ENCODE measurements at regions of chr14 and their contacts with region 1.

Region 1: GRCh38 chr14:95442633-95443021 is 73.8 kb downstream of the SYNE3 start:
- DNase-seq: peak; percentile 79
- ATAC-seq: peak; percentile 95
- H3K4me3 Mint-ChIP-seq: no peak overlapping the region
- H3K27ac Mint-ChIP-seq: peak overlapping the region; percentile 58
- H3K4me1 Mint-ChIP-seq: peaks cover 4% of the 10 kb centered on the region
- H3K27me3 Mint-ChIP-seq: no peaks in the 10 kb centered on the region

Region 2: DNA sequence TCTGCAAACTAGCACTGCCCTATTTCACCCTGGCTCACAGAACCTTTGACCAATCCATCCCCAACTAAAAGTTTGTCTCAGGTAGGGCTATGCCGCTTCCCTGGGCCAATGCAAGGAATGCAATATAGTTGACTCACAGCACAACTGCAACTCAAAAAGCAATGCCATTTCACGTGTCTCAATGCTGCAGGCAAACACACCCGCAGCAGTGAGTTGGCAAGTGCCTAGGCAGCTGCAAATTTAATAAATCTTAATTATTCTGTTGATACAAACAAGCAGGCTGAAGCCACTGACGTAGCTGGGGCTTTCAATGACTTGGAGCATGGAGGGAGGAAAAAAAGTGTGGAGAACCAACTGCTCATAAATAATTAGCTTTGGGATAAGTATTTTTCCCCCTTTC is 14.1 kb before region 1 on chr14:
- CTCF ChIA-PET with region 1: interaction called, 13 read pairs
- DNase-seq: no peak
- ATAC-seq: no peak
- H3K4me3 Mint-ChIP-seq: no peak overlapping the region
- H3K27ac Mint-ChIP-seq: no peak overlapping the region
- H3K4me1 Mint-ChIP-seq: no peaks in the 10 kb centered on the region
- H3K27me3 Mint-ChIP-seq: no peaks in the 10 kb centered on the region

Region 3: GRCh38 chr14:95534299-95535225 is 91.9 kb after region 1 on chr14 and contains the start of gene GLRX5:
- CTCF ChIA-PET with region 1: interaction called, 130 read pairs
- DNase-seq: peak; percentile 99
- ATAC-seq: peak; percentile 89
- H3K4me3 Mint-ChIP-seq: peak within 1 kb of the TSS; percentile 94
- H3K27ac Mint-ChIP-seq: peak within 1 kb of the TSS; percentile 84
- H3K4me1 Mint-ChIP-seq: peaks cover 66% of the 10 kb centered on the region
- H3K27me3 Mint-ChIP-seq: no peaks in the 10 kb centered on the region
- total RNA-seq, gene GLRX5: 36.4 to 48.5 TPM